ENCODE measurements at regions of chr1 and their contacts with region 1.

Region 1: GRCh38 chr1:3900119-3900968 is at the start of gene C1orf174:
- DNase-seq: peak; percentile 87
- ATAC-seq: peak; percentile 82
- H3K4me3 Mint-ChIP-seq: peak within 1 kb of the TSS; percentile 94
- H3K27ac Mint-ChIP-seq: peak within 1 kb of the TSS; percentile 97
- H3K4me1 Mint-ChIP-seq: peaks cover 25% of the 10 kb centered on the region
- H3K27me3 Mint-ChIP-seq: no peaks in the 10 kb centered on the region
- CTCF ChIP-seq: no peak
- total RNA-seq, gene C1orf174: 26.2 and 27.5 TPM in 2 replicates

Region 2: DNA sequence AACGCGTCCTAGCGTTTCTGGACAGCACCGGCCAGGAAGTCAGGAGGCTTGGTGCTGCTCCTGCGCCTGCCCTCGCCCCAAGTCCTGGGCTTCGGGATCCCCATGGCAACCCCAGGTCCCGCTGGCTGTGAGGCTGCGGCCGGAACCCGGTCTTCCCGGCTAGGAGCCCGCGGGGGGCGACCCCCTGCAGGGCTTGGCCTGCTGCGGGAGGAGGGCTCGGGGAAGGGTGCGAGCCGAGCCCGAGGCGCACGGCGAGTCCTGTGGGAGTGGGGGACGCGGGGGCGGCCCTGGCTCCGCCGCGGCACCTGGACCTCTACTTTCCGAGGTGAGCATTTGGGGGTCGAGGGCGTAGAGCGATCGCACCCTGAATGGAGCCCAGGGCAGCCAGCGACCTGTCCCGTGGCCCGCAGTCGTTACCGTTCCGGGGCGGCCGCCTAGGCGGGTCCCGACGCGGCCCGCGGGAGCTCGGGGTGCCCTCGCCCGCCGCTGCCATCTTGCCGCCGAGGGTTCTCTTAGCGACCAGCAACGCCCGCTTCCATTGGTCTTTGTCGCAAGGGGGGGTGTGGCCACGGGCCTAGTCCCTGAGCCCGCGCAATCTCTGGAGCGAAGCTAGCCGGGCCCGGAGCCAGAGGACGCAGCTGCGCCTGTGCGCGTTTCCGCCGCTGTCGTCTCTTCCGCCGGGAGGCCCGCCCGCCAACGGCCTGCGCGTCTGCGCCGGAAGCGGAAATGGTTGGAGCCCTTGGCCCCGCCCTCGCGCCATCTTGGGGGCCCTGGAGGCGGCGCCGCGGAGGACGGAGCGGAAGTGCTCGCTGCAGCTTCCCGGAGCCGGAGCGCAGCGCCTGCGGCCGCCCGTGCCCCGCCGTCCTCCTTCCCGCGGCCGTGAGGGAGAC is 1509.1 kb before region 1 on chr1 and contains the starts of genes MORN1 and RER1:
- CTCF ChIA-PET with region 1: no interaction called
- POLR2A ChIA-PET with region 1: no interaction called
- intact Hi-C with region 1: loop called (anchors 5 kb)
- DNase-seq: peak; percentile 96
- ATAC-seq: peak; percentile 94
- H3K4me3 Mint-ChIP-seq: peak within 1 kb of the TSS; percentile 88
- H3K27ac Mint-ChIP-seq: peak within 1 kb of the TSS; percentile 68
- H3K4me1 Mint-ChIP-seq: peaks cover 52% of the 10 kb centered on the region
- H3K27me3 Mint-ChIP-seq: no peaks in the 10 kb centered on the region
- CTCF ChIP-seq: no peak
- total RNA-seq, gene MORN1: 15.6 and 17.8 TPM in 2 replicates
- total RNA-seq, gene RER1: 102 and 105 TPM in 2 replicates

Region 3: DNA sequence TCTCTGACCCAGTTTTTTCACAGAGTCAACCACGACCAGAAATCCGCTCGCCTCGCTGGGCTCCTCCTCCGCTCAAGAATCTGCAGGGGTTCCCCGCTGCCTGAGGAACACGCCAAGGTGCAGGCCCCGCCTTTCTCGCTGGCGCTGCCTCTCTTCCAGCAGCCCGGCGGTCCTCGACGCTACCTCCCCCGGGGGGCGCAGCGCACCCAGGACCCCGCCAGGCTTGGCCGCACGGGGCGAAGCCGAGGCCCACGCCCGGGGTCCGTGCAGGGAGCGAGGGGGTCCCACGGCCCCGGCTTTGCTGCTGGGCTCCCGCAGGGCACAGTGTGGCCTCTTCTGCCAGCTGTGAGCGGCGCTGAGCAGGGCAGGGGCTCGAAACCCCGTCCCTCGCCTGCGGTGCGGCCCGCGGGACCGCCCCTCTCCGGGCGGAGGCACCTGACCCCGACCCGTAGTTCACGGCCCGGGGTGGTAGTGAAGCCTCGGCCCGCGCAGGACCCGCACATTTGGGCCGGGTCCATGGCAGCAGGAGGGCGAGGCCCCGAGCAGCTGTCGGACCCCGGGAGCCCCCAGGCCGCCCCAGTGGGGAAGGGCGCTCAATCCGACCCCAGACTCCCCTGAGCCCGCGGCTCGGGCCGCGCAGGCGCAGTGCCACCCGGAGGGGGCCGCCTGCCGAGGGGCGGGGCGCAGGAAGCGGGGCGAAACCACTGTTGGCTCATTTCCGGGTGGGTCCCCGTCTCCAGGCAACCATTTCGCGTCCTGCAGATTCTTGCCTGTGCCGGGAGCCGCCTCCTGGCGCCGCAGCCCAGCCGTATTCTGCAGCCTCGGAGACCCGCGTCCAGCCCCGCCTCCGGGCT is 1257.6 kb before region 1 on chr1:
- CTCF ChIA-PET with region 1: no interaction called
- POLR2A ChIA-PET with region 1: no interaction called
- intact Hi-C with region 1: loop called (anchors 10 kb)
- DNase-seq: peak; percentile 92
- ATAC-seq: peak; percentile 79
- H3K4me3 Mint-ChIP-seq: peak overlapping the region; percentile 80
- H3K27ac Mint-ChIP-seq: peak overlapping the region; percentile 73
- H3K4me1 Mint-ChIP-seq: peaks cover 11% of the 10 kb centered on the region
- H3K27me3 Mint-ChIP-seq: peaks cover 3% of the 10 kb centered on the region
- CTCF ChIP-seq: no peak

Region 4: GRCh38 chr1:3772027-3772714 is 128.2 kb before region 1 on chr1:
- CTCF ChIA-PET with region 1: interaction called, 3 read pairs
- POLR2A ChIA-PET with region 1: interaction called, 4 read pairs
- intact Hi-C with region 1: loop called (anchors 1 kb)
- DNase-seq: peak; percentile 87
- ATAC-seq: peak; percentile 89
- H3K4me3 Mint-ChIP-seq: peak overlapping the region; percentile 76
- H3K27ac Mint-ChIP-seq: no peak overlapping the region
- H3K4me1 Mint-ChIP-seq: peaks cover 18% of the 10 kb centered on the region
- H3K27me3 Mint-ChIP-seq: peaks cover 5% of the 10 kb centered on the region
- CTCF ChIP-seq: no peak

Region 5: DNA sequence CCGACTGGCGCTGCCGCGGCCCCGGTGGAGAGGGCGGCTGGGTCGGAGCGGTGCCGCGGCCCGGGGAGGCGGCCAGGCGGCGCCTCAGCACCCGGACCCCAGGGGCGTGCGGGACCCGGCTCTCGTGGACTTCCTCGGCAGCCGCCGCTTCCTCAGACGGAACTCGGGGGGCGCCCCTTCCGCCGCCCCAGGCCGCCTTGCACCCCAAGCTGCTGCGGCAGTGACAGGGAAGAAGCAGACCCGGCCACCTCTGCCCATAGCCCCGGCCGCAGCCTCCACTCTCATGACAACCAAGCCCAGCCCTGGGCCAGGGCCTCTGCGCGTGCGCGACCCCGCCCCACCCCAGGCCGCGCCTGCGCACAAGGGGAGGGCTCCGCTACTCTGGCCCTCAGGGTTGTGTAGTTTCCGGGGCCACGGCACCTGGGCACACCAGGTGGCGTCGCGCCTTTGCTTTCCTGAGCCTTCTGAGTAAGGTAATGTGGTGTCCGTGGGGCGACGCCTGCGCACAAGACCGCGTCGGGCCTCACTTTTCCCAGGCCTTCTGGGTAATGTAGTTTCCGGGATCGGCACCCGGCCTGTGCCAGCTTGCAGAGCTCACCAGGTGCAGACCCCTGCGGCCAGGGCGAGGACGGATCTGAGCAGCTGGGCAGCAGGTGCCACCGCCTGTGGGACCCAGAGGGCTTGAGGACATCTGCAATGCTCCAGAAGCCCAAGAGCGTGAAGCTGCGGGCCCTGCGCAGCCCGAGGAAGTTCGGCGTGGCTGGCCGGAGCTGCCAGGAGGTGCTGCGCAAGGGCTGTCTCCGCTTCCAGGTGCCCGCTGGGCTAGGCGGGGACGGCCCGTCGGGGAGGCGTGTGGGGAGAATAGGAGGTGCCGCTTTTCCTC is 43.2 kb before region 1 on chr1 and contains the starts of genes CEP104 and DFFB:
- CTCF ChIA-PET with region 1: interaction called, 5 read pairs
- POLR2A ChIA-PET with region 1: interaction called, 20 read pairs
- intact Hi-C with region 1: loop called (anchors 1 kb)
- DNase-seq: peak; percentile 99
- ATAC-seq: peak; percentile 97
- H3K4me3 Mint-ChIP-seq: peak within 1 kb of the TSS; percentile 95
- H3K27ac Mint-ChIP-seq: peak within 1 kb of the TSS; percentile 86
- H3K4me1 Mint-ChIP-seq: peaks cover 31% of the 10 kb centered on the region
- H3K27me3 Mint-ChIP-seq: no peaks in the 10 kb centered on the region
- CTCF ChIP-seq: no peak
- total RNA-seq, gene CEP104: 38.0 and 45.1 TPM in 2 replicates
- total RNA-seq, gene DFFB: 9.3 and 10.5 TPM in 2 replicates